ENCODE measurements at regions of chr6 and their contacts with region 1.

Region 1: GRCh38 chr6:144931172-144932035 is 646.3 kb downstream of the UTRN start:
- DNase-seq: no peak
- ATAC-seq: no peak
- H3K4me3 Mint-ChIP-seq: no peak overlapping the region
- H3K27ac Mint-ChIP-seq: no peak overlapping the region
- H3K4me1 Mint-ChIP-seq: no peaks in the 10 kb centered on the region
- H3K27me3 Mint-ChIP-seq: peaks cover 5% of the 10 kb centered on the region
- CTCF ChIP-seq: no peak

Region 2: DNA sequence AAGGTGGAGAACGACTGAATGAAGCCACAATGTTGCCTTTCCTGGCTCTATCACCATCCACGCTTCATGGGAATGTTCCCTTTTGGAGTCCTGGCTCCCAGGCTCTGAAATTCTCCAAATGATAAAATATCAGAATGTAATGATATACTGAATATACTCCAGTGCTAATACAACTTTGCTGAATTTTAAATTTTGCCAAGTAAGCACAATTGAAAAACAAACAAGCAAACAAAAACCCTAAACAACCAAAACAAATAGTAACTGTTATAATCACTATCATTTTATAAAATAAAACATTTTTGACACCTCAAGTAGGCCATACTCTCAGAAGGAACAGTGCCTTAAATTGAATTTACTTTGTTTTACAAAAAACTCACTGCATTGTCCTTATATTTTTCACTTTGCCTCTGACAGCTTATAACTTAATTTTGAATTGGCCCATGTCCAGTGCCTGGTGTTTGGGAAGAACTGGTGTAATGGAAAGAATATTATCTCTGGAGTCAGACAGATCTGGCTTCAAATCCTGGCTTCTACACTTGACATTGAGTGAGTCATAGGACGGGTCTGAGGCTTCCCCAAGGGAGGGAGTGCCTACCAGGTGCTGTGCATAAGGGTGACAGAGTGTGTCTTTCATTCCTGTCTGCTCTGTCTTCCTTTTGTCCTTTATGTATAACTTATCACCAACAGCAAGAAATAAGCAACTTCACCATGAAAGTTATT is 105.6 kb after region 1 on chr6:
- CTCF ChIA-PET with region 1: no interaction called
- POLR2A ChIA-PET with region 1: no interaction called
- intact Hi-C with region 1: no loop called
- DNase-seq: no peak
- ATAC-seq: no peak
- H3K4me3 Mint-ChIP-seq: no peak overlapping the region
- H3K27ac Mint-ChIP-seq: no peak overlapping the region
- H3K4me1 Mint-ChIP-seq: no peaks in the 10 kb centered on the region
- H3K27me3 Mint-ChIP-seq: no peaks in the 10 kb centered on the region
- CTCF ChIP-seq: no peak

Region 3: DNA sequence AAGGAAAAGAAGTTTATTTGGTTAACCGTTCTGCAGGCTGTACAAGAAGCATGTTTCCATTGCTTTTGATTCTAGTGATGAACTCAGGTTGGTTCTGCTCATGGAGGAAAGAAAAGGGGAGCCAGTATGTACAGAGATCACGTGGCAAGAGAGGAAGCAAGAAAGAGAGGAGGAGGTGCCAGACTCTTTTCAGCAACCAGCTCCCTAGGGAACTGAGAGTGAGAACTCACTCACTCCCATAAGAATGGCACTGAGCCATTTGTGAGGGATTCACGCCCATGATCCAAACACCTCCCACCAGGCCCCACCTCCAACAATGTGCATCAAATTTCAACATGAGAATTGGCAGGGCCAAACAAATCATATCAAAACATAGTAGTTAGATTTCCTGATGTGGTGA is 154.8 kb after region 1 on chr6:
- CTCF ChIA-PET with region 1: no interaction called
- POLR2A ChIA-PET with region 1: no interaction called
- intact Hi-C with region 1: no loop called
- DNase-seq: no peak
- ATAC-seq: no peak
- H3K4me3 Mint-ChIP-seq: no peak overlapping the region
- H3K27ac Mint-ChIP-seq: no peak overlapping the region
- H3K4me1 Mint-ChIP-seq: no peaks in the 10 kb centered on the region
- H3K27me3 Mint-ChIP-seq: no peaks in the 10 kb centered on the region
- CTCF ChIP-seq: no peak

Region 4: GRCh38 chr6:145887969-145888368 is 956.6 kb after region 1 on chr6:
- CTCF ChIA-PET with region 1: no interaction called
- POLR2A ChIA-PET with region 1: no interaction called
- intact Hi-C with region 1: loop called (anchors 10 kb)
- DNase-seq: no peak
- ATAC-seq: no peak
- H3K4me3 Mint-ChIP-seq: no peak overlapping the region
- H3K27ac Mint-ChIP-seq: no peak overlapping the region
- H3K4me1 Mint-ChIP-seq: no peaks in the 10 kb centered on the region
- H3K27me3 Mint-ChIP-seq: no peaks in the 10 kb centered on the region
- CTCF ChIP-seq: no peak

Measured in activated B cell treated with CpG ODN at 0.5 μM for 24 hours (primary cell).